Activated T-helper 2 cell treated with anti-CD3 and anti-CD28 coated beads, Interferon-gamma antibody, Interleukin-2, Interleukin-4, amounts not matched to agents 10 μg/mL and 5 μg/mL and 100 μg/mL, durations not matched to agents 14 hours and 24 hours and 36 hours (primary cell): ENCODE measurements at regions of chr5 and their contacts with region 1.

Region 1: GRCh38 chr5:132180134-132180745 is 47.4 kb downstream of the P4HA2 start:
- DNase-seq: no peak
- H3K4me3 Mint-ChIP-seq: peak overlapping the region; percentile 19
- H3K27ac Mint-ChIP-seq: peak overlapping the region; percentile 85
- H3K4me1 Mint-ChIP-seq: peaks cover 44% of the 10 kb centered on the region
- H3K27me3 Mint-ChIP-seq: no peaks in the 10 kb centered on the region

Region 2: DNA sequence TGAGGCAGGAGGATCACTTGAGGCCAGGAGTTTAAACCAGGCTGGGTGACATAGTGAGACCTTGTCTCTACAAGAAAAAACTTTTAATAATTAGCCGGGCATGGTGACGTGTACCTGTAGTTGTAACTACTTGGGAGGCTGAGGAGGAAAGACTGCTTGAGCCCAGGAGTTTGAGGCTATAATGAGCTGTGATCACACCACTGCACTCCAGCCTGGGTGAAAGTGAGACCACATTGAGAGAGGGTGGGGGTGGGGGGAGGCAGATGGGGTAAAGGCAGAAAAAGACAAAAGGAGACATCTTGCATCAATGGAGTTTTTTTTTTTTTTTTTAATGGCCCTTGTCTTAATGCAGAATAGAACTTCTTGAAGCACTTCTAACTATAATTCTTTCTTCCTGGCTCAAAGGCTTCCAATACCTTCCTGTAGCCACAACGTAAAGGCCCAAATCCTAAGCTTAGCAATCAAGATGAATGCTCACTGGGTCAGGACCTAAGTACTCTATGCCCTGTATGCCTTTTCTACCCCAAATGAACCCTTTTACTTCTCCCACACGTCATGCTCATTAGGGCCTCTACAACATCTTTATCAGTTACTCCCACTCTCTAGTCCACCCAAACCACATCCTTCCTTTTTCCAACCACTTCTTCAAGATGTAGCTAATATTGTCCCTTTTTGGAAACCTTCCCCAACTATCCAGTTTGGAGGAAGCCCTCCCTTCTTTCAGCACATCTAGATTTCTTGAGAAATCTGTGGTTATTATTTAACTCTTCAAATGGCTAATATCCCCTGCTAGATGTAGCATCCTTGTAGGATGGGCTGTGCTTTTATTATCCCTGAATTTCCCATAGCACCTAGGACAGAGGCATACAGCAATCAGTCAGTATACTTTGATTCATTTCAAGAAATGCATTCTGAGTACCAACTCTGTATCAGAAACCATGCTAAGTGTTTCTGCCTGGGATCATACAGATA is 65.8 kb before region 1 on chr5:
- intact Hi-C with region 1: loop called (anchors 1 kb)
- DNase-seq: no peak
- H3K4me3 Mint-ChIP-seq: peak overlapping the region; percentile 0
- H3K27ac Mint-ChIP-seq: peak overlapping the region; percentile 49
- H3K4me1 Mint-ChIP-seq: peaks cover 58% of the 10 kb centered on the region
- H3K27me3 Mint-ChIP-seq: no peaks in the 10 kb centered on the region

Region 3: DNA sequence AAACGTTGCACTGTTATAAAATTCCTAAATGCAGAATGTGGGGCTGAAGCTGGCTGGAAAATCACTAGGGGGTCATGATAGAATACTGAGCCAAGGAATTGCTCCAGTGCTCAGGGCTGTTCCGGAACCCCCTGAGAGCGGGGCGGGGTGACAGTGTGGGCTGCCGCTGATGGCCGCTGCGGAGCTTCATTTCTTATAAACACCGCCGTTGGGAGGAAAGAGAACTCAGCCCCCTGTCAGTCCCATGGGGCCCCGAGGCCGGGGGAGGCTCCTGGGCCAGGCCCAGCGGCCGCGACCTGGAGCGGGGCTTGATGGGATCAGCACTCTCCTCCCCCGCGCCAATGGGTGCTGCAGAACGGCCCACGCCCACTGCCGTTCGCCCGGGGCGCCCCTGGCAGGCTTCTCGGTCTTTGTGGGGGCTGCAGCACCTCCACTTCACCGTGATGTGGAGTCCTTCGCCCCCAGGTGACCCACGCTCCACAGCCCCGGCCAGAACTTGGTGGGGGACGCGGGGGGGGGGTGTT is 315.5 kb after region 1 on chr5:
- intact Hi-C with region 1: loop called (anchors 5 kb)
- DNase-seq: peak; percentile 74
- H3K4me3 Mint-ChIP-seq: peak overlapping the region; percentile 88
- H3K27ac Mint-ChIP-seq: peak overlapping the region; percentile 91
- H3K4me1 Mint-ChIP-seq: peaks cover 56% of the 10 kb centered on the region
- H3K27me3 Mint-ChIP-seq: no peaks in the 10 kb centered on the region